H1 (cell line): ENCODE measurements at regions of chr6 and their contacts with region 1.

Region 1: GRCh38 chr6:159789377-159790148 is at the start of gene TCP1:
- DNase-seq: peak; percentile 96 to 97
- H3K4me3 ChIP-seq: peak within 1 kb of the TSS; percentile 78 to 94 (median 90)
- H3K27ac ChIP-seq: peak within 1 kb of the TSS; percentile 91
- H3K4me1 ChIP-seq: peaks cover 0 to 12% (median 7%) of the 10 kb centered on the region in 4 experiments; a peak in 4 of 7 replicates
- H3K27me3 ChIP-seq: no peaks in the 10 kb centered on the region
- CTCF ChIP-seq: no peak; a peak in 1 of 4 replicates
- EP300 ChIP-seq: no peak
- POLR2A ChIP-seq: peak; percentile 77 to 89; a peak in 2 of 3 replicates
- RAD21 ChIP-seq: no peak; a peak in 1 of 4 replicates
- total RNA-seq, gene TCP1: 331 and 348 TPM in 2 replicates

Region 2: DNA sequence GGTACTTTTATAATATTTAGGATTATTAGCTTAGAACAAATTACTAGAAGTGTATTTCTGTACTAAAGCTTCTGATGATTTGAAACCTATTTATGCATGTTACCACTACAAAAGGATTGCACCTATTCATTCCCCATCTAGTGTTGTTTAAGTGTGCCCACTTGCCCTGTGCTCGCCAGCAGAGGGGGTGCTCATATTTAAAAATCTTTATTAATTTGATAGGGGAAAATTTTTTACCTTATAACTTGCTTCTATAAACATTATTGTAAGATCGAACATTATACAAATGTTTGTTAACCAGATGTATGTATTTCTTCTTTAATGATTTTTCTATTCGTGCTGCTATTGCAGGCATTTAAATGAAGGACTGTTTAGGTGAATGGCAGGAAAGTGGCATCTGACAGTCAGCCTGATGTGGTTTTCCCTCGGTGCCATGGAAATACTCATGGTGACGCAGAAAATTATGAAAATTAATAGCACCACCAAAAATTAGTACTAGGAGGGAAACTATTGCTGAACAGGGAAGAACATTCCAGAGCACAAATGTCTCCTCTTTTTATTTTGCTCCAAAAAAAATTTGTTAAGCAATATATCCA is 664.5 kb before region 1 on chr6:
- CTCF ChIA-PET with region 1: no interaction called
- POLR2A ChIA-PET with region 1: no interaction called
- DNase-seq: no peak
- H3K4me3 ChIP-seq: no peak overlapping the region
- H3K27ac ChIP-seq: no peak overlapping the region
- H3K4me1 ChIP-seq: no peaks in the 10 kb centered on the region
- H3K27me3 ChIP-seq: no peaks in the 10 kb centered on the region; a peak in 1 of 7 replicates
- CTCF ChIP-seq: peak in 2 of 3 experiments; percentile 2 to 6; a peak in 2 of 4 replicates
- EP300 ChIP-seq: no peak
- POLR2A ChIP-seq: no peak
- RAD21 ChIP-seq: no peak

Region 3: DNA sequence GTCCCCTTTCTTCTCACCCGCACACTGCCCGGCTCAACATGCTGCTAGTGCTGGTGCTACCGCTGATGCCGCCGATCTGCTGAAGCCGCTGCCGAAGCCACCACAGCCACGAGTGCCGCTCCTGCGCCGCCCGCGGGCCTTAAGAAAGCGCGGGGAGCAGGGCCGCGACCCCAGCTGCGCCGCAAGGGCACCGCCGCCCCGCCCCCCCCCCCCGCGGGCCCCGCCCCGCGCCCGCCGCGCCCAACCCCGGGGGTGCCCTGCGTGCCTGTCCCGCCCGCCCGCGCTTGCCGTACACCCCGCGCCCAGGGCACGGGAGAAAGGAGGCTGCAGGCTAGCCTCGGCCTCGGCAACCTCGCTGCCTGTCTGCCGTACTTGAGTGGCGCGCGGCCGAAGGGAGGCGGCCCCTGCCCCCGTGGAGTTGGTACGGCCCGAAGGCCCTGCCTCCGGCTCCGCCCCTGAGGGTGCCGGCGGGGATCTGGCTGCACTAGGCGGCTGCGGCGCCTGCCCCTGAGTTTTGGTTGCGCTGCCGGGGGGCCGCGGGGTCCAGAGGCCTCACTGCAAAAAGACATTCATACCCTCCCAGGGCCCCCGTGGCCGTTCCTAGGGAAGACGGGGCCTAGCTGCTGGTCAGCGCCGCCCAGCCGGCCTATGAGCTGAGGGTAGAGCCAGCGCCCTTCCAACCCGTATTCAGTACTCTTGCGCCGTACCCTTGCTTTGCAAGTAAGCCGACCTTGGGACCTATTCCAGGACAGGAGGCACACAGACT is 96.3 kb before region 1 on chr6 and contains the start of gene SOD2:
- CTCF ChIA-PET with region 1: interaction called, 5 read pairs
- POLR2A ChIA-PET with region 1: interaction called, 22 read pairs
- DNase-seq: peak; percentile 53 to 92
- H3K4me3 ChIP-seq: peak within 1 kb of the TSS; percentile 51 to 99 (median 88)
- H3K27ac ChIP-seq: peak within 1 kb of the TSS; percentile 95
- H3K4me1 ChIP-seq: peaks cover 3 to 15% (median 8%) of the 10 kb centered on the region in 4 experiments
- H3K27me3 ChIP-seq: no peaks in the 10 kb centered on the region
- CTCF ChIP-seq: no peak; a peak in 1 of 4 replicates
- EP300 ChIP-seq: peak in 1 of 2 experiments; percentile 96; a peak in 2 of 3 replicates
- POLR2A ChIP-seq: peak; percentile 74 to 85
- RAD21 ChIP-seq: no peak
- total RNA-seq, gene SOD2: 88.7 and 96.9 TPM in 2 replicates

Region 4: DNA sequence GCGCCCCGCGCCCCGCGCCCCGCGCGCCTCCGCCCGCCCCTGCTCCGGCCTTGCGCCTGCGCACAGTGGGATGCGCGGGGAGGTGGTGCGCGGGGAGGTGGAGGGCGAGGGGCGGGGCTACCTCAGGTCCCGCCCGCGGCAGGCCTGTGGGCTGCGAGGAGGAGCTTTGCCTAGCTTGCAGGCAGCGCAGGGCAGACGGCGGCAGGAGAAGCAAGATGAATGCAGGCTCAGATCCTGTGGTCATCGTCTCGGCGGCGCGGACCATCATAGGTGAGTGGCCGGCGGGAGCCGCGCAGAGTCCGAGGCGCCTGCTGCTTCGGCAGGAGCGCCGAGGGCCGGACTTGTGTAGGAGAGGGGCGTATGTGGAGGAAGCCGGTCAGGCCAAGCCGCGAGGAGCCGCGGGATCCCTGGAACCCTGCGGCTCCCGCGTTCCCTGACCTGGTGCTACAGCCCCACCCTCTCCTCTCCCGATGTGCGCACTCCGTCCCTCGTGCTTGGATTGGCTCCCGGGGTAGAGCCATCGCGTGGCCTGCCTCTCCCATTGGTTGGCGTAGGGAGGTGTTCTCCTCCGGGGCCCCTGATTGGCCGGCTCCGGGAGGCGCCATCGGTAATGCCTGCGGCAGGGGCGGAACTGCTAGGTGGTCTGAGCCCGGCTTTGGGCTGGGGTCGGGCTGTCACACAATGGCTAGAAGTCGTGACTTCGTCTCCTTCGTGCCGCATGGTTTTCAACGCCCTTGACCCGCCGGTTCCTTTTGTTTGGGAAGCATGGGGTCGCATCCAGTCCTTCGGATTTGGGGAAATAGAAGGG is 27.5 kb before region 1 on chr6 and contains the start of gene ACAT2:
- CTCF ChIA-PET with region 1: interaction called, 4 read pairs
- POLR2A ChIA-PET with region 1: interaction called, 60 read pairs
- DNase-seq: peak; percentile 86 to 93
- H3K4me3 ChIP-seq: peak within 1 kb of the TSS; percentile 87 to 98 (median 90)
- H3K27ac ChIP-seq: peak within 1 kb of the TSS; percentile 95
- H3K4me1 ChIP-seq: peaks cover 6 to 15% (median 12%) of the 10 kb centered on the region in 4 experiments; a peak in 6 of 7 replicates
- H3K27me3 ChIP-seq: no peaks in the 10 kb centered on the region
- CTCF ChIP-seq: no peak
- EP300 ChIP-seq: no peak
- POLR2A ChIP-seq: peak; percentile 31 to 90
- RAD21 ChIP-seq: no peak
- total RNA-seq, gene ACAT2: 166 and 175 TPM in 2 replicates

Region 5: GRCh38 chr6:159801935-159802334 is 12.4 kb after region 1 on chr6:
- CTCF ChIA-PET with region 1: no interaction called
- POLR2A ChIA-PET with region 1: interaction called, 41 read pairs
- DNase-seq: no peak
- H3K4me3 ChIP-seq: no peak overlapping the region
- H3K27ac ChIP-seq: no peak overlapping the region
- H3K4me1 ChIP-seq: no peaks in the 10 kb centered on the region
- H3K27me3 ChIP-seq: no peaks in the 10 kb centered on the region
- CTCF ChIP-seq: no peak
- EP300 ChIP-seq: no peak
- POLR2A ChIP-seq: no peak
- RAD21 ChIP-seq: no peak

Region 6: GRCh38 chr6:159852877-159853276 is 63.3 kb after region 1 on chr6:
- CTCF ChIA-PET with region 1: interaction called, 11 read pairs
- POLR2A ChIA-PET with region 1: interaction called, 24 read pairs
- DNase-seq: no peak
- H3K4me3 ChIP-seq: no peak overlapping the region
- H3K27ac ChIP-seq: no peak overlapping the region
- H3K4me1 ChIP-seq: no peaks in the 10 kb centered on the region
- H3K27me3 ChIP-seq: no peaks in the 10 kb centered on the region
- CTCF ChIP-seq: peak in 2 of 3 experiments; percentile 32 to 39; a peak in 2 of 4 replicates
- EP300 ChIP-seq: no peak
- POLR2A ChIP-seq: no peak
- RAD21 ChIP-seq: peak; percentile 67 to 74

Region 7: DNA sequence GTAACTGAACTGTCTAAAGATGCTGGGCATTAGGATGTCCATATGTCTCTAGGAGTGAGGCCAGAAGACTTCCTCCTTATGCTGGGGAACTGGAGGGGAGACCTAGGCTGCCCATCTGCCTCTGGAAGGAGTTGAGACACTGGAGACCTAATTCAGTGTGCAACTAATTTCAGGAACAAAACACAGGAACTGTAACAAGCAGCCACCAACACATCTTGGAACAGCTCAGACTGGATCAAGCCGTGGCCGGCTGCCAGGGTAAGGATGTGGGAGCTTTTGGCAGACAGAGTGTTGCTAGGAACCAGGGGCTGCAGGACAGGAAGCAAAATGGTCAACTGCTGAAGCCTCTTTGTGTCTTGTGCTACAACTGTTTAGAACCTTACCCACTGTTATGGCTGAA is 84.9 kb after region 1 on chr6:
- CTCF ChIA-PET with region 1: no interaction called
- POLR2A ChIA-PET with region 1: no interaction called
- DNase-seq: no peak
- H3K4me3 ChIP-seq: no peak overlapping the region
- H3K27ac ChIP-seq: no peak overlapping the region
- H3K4me1 ChIP-seq: peaks cover 0 to 7% (median 4%) of the 10 kb centered on the region in 4 experiments; a peak in 5 of 7 replicates
- H3K27me3 ChIP-seq: no peaks in the 10 kb centered on the region
- CTCF ChIP-seq: no peak
- EP300 ChIP-seq: no peak
- POLR2A ChIP-seq: no peak
- RAD21 ChIP-seq: no peak